ENCODE measurements at regions of chr5 and their contacts with region 1.

Region 1: GRCh38 chr5:132410451-132411381 is 41.2 kb downstream of the SLC22A5 start:
- DNase-seq: peak; percentile 69 to 93 (median 76)
- ATAC-seq: peak; percentile 69
- H3K4me3 ChIP-seq: peak overlapping the region; percentile 91
- H3K4me3 Mint-ChIP-seq: peak overlapping the region; percentile 96
- H3K27ac ChIP-seq: peak overlapping the region; percentile 98
- H3K27ac Mint-ChIP-seq: peak overlapping the region; percentile 98
- H3K4me1 ChIP-seq: peaks cover 64% of the 10 kb centered on the region
- H3K4me1 Mint-ChIP-seq: peaks cover 92% of the 10 kb centered on the region
- H3K27me3 ChIP-seq: no peaks in the 10 kb centered on the region
- H3K27me3 Mint-ChIP-seq: no peaks in the 10 kb centered on the region
- CTCF ChIP-seq: peak; percentile 74

Region 2: DNA sequence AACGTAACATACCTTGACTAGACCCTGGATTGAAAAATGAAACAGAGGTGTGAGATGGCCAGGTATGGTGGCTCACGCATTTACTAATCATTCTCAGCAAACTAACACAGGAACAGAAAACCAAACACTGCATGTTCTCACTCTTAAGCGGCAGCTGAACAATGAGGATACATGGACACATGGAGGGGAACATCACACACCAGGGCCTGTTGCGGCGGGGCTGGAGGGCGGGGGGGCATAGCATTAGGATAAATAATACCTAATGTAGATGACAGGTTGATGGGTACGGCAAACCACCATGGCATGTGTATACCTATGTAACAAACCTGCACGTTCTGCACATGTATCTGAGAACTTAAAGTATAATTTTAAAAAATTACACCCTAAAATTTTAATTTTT is 791.6 kb before region 1 on chr5:
- CTCF ChIA-PET with region 1: no interaction called
- POLR2A ChIA-PET with region 1: no interaction called
- intact Hi-C with region 1: no loop called
- DNase-seq: no peak
- ATAC-seq: no peak
- H3K4me3 ChIP-seq: no peak overlapping the region
- H3K4me3 Mint-ChIP-seq: peak overlapping the region; percentile 35
- H3K27ac ChIP-seq: no peak overlapping the region
- H3K27ac Mint-ChIP-seq: peak overlapping the region; percentile 21
- H3K4me1 ChIP-seq: peaks cover 8% of the 10 kb centered on the region
- H3K4me1 Mint-ChIP-seq: peaks cover 88% of the 10 kb centered on the region
- H3K27me3 ChIP-seq: no peaks in the 10 kb centered on the region
- H3K27me3 Mint-ChIP-seq: no peaks in the 10 kb centered on the region
- CTCF ChIP-seq: no peak

Region 3: GRCh38 chr5:132064738-132065331 is 345.9 kb before region 1 on chr5:
- CTCF ChIA-PET with region 1: no interaction called
- POLR2A ChIA-PET with region 1: no interaction called
- intact Hi-C with region 1: no loop called
- DNase-seq: peak; percentile 57 to 86 (median 72)
- ATAC-seq: peak; percentile 75
- H3K4me3 ChIP-seq: no peak overlapping the region
- H3K4me3 Mint-ChIP-seq: no peak overlapping the region
- H3K27ac ChIP-seq: no peak overlapping the region
- H3K27ac Mint-ChIP-seq: no peak overlapping the region
- H3K4me1 ChIP-seq: peaks cover 29% of the 10 kb centered on the region
- H3K4me1 Mint-ChIP-seq: peaks cover 15% of the 10 kb centered on the region
- H3K27me3 ChIP-seq: no peaks in the 10 kb centered on the region
- H3K27me3 Mint-ChIP-seq: no peaks in the 10 kb centered on the region
- CTCF ChIP-seq: peak; percentile 82

Region 4: DNA sequence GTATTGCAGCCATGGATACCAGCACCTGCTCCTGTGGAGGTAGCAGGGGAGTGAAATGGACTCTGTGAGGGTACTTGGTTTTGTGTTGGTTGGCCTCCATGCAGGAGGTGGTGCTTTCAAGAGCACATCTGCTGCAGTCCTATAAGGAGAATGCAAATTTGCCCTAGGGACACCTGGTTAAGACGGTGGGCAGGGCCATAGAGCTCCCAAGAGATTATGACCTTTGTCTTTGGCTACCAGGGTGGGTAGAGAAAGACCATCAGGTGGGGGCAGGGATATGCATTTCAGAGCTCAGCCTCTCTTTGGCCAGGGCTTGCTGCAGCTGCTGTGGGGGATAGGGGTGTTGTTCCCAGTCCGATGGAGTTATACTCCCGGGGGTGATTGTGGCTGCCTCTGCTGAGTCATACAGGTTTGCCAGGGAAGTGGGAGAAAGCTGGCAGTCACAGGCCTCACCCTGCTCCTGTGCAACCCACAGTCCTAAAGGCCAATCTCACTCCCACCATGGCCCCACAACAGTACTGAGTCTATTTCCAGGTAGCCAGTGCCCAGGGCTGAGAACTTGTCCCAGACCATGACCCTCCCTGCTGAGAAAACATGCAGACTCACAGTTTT is 167.2 kb before region 1 on chr5:
- CTCF ChIA-PET with region 1: no interaction called
- POLR2A ChIA-PET with region 1: no interaction called
- intact Hi-C with region 1: no loop called
- DNase-seq: no peak
- ATAC-seq: no peak
- H3K4me3 ChIP-seq: no peak overlapping the region
- H3K4me3 Mint-ChIP-seq: no peak overlapping the region
- H3K27ac ChIP-seq: no peak overlapping the region
- H3K27ac Mint-ChIP-seq: no peak overlapping the region
- H3K4me1 ChIP-seq: no peaks in the 10 kb centered on the region
- H3K4me1 Mint-ChIP-seq: no peaks in the 10 kb centered on the region
- H3K27me3 ChIP-seq: no peaks in the 10 kb centered on the region
- H3K27me3 Mint-ChIP-seq: peaks cover 8% of the 10 kb centered on the region
- CTCF ChIP-seq: no peak

Region 5: GRCh38 chr5:132386644-132387286 is 24.0 kb before region 1 on chr5:
- CTCF ChIA-PET with region 1: interaction called, 6 read pairs
- POLR2A ChIA-PET with region 1: interaction called, 27 read pairs
- intact Hi-C with region 1: loop called in 1 of 2 experiments (anchors 2 kb)
- DNase-seq: peak; percentile 66 to 90 (median 75)
- ATAC-seq: peak; percentile 92
- H3K4me3 ChIP-seq: no peak overlapping the region
- H3K4me3 Mint-ChIP-seq: no peak overlapping the region
- H3K27ac ChIP-seq: no peak overlapping the region
- H3K27ac Mint-ChIP-seq: peak overlapping the region; percentile 60
- H3K4me1 ChIP-seq: peaks cover 30% of the 10 kb centered on the region
- H3K4me1 Mint-ChIP-seq: peaks cover 31% of the 10 kb centered on the region
- H3K27me3 ChIP-seq: no peaks in the 10 kb centered on the region
- H3K27me3 Mint-ChIP-seq: no peaks in the 10 kb centered on the region
- CTCF ChIP-seq: peak; percentile 76

Region 6: GRCh38 chr5:132426525-132427138 is 15.9 kb after region 1 on chr5:
- CTCF ChIA-PET with region 1: interaction called, 5 read pairs
- POLR2A ChIA-PET with region 1: interaction called, 81 read pairs
- intact Hi-C with region 1: loop called in 1 of 2 experiments (anchors 2 kb)
- DNase-seq: peak; percentile 20 to 88 (median 52)
- ATAC-seq: peak; percentile 32
- H3K4me3 ChIP-seq: peak overlapping the region; percentile 13
- H3K4me3 Mint-ChIP-seq: peak overlapping the region; percentile 77
- H3K27ac ChIP-seq: peak overlapping the region; percentile 78 to 85
- H3K27ac Mint-ChIP-seq: peak overlapping the region; percentile 93
- H3K4me1 ChIP-seq: peaks cover 99% of the 10 kb centered on the region
- H3K4me1 Mint-ChIP-seq: peaks cover 97% of the 10 kb centered on the region
- H3K27me3 ChIP-seq: no peaks in the 10 kb centered on the region
- H3K27me3 Mint-ChIP-seq: no peaks in the 10 kb centered on the region
- CTCF ChIP-seq: no peak

Region 7: GRCh38 chr5:132456296-132457001 is 45.7 kb after region 1 on chr5:
- CTCF ChIA-PET with region 1: interaction called, 7 read pairs
- POLR2A ChIA-PET with region 1: interaction called, 89 read pairs
- intact Hi-C with region 1: loop called in 1 of 2 experiments (anchors 5 kb)
- DNase-seq: peak; percentile 56 to 91 (median 67)
- ATAC-seq: peak; percentile 73
- H3K4me3 ChIP-seq: peak overlapping the region; percentile 17
- H3K4me3 Mint-ChIP-seq: peak overlapping the region; percentile 57
- H3K27ac ChIP-seq: peak overlapping the region; percentile 88 to 89
- H3K27ac Mint-ChIP-seq: peak overlapping the region; percentile 97
- H3K4me1 ChIP-seq: peaks cover 87% of the 10 kb centered on the region
- H3K4me1 Mint-ChIP-seq: peaks cover 93% of the 10 kb centered on the region
- H3K27me3 ChIP-seq: no peaks in the 10 kb centered on the region
- H3K27me3 Mint-ChIP-seq: no peaks in the 10 kb centered on the region
- CTCF ChIP-seq: no peak

Region 8: DNA sequence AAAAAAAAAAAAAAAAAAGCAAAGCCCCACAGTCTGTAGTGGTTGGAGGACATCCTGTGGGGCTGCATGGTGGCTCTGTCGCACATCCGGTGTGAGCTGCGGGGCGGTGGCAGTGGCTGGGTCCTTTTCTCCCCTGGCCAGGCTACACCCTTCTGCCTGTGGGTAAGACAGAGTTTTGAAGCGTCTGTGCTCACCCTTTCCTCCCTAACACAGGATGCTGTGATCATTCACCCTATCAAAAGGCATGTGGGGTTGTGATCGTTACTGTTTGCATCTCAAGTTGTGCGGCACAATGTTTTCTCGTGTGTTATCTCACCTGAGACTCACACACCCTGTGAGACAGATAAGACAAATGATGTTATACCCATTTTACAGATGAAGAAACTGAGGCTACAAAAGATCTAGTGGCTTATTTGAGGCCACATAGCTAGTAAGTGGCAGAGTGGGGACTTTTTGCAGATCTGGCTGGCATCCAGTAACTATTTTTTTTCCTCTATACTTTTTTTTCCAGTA is 62.4 kb after region 1 on chr5:
- CTCF ChIA-PET with region 1: interaction called, 9 read pairs
- POLR2A ChIA-PET with region 1: interaction called, 168 read pairs
- intact Hi-C with region 1: loop called in 1 of 2 experiments (anchors 5 kb)
- DNase-seq: peak; percentile 73 to 96 (median 81)
- ATAC-seq: peak; percentile 68
- H3K4me3 ChIP-seq: no peak overlapping the region
- H3K4me3 Mint-ChIP-seq: peak overlapping the region; percentile 74
- H3K27ac ChIP-seq: peak overlapping the region; percentile 70 to 77
- H3K27ac Mint-ChIP-seq: peak overlapping the region; percentile 97
- H3K4me1 ChIP-seq: peaks cover 92% of the 10 kb centered on the region
- H3K4me1 Mint-ChIP-seq: peaks cover 96% of the 10 kb centered on the region
- H3K27me3 ChIP-seq: no peaks in the 10 kb centered on the region
- H3K27me3 Mint-ChIP-seq: peaks cover 10% of the 10 kb centered on the region
- CTCF ChIP-seq: no peak